ENCODE measurements at regions of chr3 and their contacts with region 1.

Region 1: GRCh38 chr3:30475038-30475808 is 131.2 kb upstream of the TGFBR2 start:
- DNase-seq: peak; percentile 64
- H3K4me3 Mint-ChIP-seq: peak overlapping the region; percentile 2
- H3K27ac Mint-ChIP-seq: peak overlapping the region; percentile 14
- H3K4me1 Mint-ChIP-seq: peaks cover 52% of the 10 kb centered on the region
- H3K27me3 Mint-ChIP-seq: no peaks in the 10 kb centered on the region

Region 2: DNA sequence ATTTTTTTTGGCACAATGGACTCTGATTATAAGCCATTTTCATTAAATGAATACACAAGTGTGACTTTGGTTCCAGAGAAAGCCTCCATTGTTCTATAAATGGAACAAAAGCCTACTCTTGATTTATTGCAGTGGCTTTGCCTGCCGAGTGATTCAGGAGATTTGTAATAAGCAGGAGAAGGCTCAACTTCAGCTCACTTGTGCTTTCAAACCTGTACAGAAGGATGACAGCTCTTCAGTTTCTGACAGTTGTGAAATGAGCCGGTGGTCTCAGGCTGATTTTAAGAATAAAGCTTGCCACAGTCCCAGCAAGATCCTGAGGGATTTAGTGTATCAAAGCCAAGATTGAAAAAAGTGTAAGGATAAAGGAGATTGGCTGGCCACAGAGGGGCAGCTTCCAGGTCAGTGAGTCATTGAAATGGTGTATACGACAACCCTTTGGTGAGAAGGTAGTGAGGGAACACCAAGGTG is 307.6 kb before region 1 on chr3:
- CTCF ChIA-PET with region 1: no interaction called
- intact Hi-C with region 1: no loop called
- DNase-seq: no peak
- H3K4me3 Mint-ChIP-seq: no peak overlapping the region
- H3K27ac Mint-ChIP-seq: no peak overlapping the region
- H3K4me1 Mint-ChIP-seq: no peaks in the 10 kb centered on the region
- H3K27me3 Mint-ChIP-seq: no peaks in the 10 kb centered on the region

Region 3: GRCh38 chr3:30353711-30354467 is 121.3 kb before region 1 on chr3:
- CTCF ChIA-PET with region 1: no interaction called
- intact Hi-C with region 1: loop called (anchors 2 kb)
- DNase-seq: peak; percentile 74
- H3K4me3 Mint-ChIP-seq: no peak overlapping the region
- H3K27ac Mint-ChIP-seq: peak overlapping the region; percentile 59
- H3K4me1 Mint-ChIP-seq: peaks cover 72% of the 10 kb centered on the region
- H3K27me3 Mint-ChIP-seq: no peaks in the 10 kb centered on the region

Region 4: GRCh38 chr3:30401971-30402370 is 73.3 kb before region 1 on chr3:
- CTCF ChIA-PET with region 1: no interaction called
- intact Hi-C with region 1: loop called (anchors 5 kb)
- DNase-seq: peak; percentile 12
- H3K4me3 Mint-ChIP-seq: no peak overlapping the region
- H3K27ac Mint-ChIP-seq: no peak overlapping the region
- H3K4me1 Mint-ChIP-seq: peaks cover 16% of the 10 kb centered on the region
- H3K27me3 Mint-ChIP-seq: no peaks in the 10 kb centered on the region

Region 5: GRCh38 chr3:30486368-30486767 is 11.1 kb after region 1 on chr3:
- CTCF ChIA-PET with region 1: no interaction called
- intact Hi-C with region 1: no loop called
- DNase-seq: no peak
- H3K4me3 Mint-ChIP-seq: no peak overlapping the region
- H3K27ac Mint-ChIP-seq: no peak overlapping the region
- H3K4me1 Mint-ChIP-seq: no peaks in the 10 kb centered on the region
- H3K27me3 Mint-ChIP-seq: no peaks in the 10 kb centered on the region

Region 6: GRCh38 chr3:30502742-30503073 is 27.5 kb after region 1 on chr3:
- CTCF ChIA-PET with region 1: interaction called, 3 read pairs
- intact Hi-C with region 1: loop called (anchors 1 kb)
- DNase-seq: no peak
- H3K4me3 Mint-ChIP-seq: no peak overlapping the region
- H3K27ac Mint-ChIP-seq: peak overlapping the region; percentile 43
- H3K4me1 Mint-ChIP-seq: peaks cover 30% of the 10 kb centered on the region
- H3K27me3 Mint-ChIP-seq: no peaks in the 10 kb centered on the region

Region 7: DNA sequence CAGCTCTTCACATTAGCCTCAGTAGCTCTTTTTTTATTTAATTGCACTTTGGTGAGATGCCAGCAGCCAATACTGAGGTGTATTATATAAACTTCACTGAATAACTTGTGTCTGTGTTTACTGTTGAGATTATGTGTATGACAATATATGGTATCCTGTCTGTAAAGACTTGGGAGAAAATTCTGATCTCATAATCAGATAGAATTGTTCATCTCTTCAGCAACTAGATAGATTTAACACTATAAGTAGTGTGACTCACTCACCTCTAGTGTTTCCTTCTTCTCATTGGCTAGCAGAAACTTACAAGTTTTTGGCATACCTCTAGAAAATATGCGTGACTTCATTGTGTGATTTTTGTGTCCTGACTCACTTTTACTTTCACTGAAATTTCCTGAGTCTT is 63.6 kb after region 1 on chr3:
- CTCF ChIA-PET with region 1: no interaction called
- intact Hi-C with region 1: loop called (anchors 2 kb)
- DNase-seq: no peak
- H3K4me3 Mint-ChIP-seq: no peak overlapping the region
- H3K27ac Mint-ChIP-seq: no peak overlapping the region
- H3K4me1 Mint-ChIP-seq: peaks cover 19% of the 10 kb centered on the region
- H3K27me3 Mint-ChIP-seq: no peaks in the 10 kb centered on the region

Region 8: DNA sequence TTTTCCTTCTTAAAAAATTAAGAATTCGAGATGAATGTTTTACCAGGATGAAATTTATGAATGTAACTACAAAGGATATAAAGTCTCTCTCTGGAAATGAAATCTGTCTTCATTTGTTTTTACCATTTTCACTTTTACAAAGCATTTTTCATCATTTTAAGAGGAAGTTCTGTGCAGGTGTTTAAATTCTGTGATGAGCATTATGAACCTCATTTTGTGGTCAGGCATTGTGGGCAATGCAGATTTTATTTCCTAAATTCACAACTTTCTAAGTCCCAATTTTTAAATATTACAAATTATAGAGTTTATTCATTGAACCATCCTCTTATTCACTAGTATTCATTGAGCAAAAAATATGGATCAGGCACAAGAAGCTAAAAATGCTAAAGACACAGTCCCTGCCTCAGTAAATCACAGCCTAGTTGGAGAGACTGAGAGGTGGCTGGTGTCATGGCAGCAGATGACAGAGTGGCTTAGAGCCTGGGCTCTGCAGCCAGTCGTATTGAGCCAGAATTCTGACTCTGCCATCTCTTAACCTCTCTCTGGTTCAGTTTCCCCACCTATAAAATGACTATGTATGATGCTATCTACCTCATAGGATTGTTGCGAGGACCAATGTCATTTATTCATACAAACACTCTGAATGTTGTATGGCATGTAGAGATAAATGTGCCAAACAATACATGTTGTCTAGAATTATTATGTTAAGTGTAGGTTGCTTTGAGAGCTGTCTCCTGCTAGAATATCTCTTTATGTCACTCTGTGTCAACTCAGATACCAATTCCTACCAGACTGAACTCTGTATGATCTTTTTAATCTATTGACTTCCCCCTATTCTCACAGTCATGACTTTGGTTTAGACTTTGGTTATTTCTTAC is 123.7 kb after region 1 on chr3:
- CTCF ChIA-PET with region 1: no interaction called
- intact Hi-C with region 1: loop called (anchors 1 kb)
- DNase-seq: peak; percentile 48
- H3K4me3 Mint-ChIP-seq: no peak overlapping the region
- H3K27ac Mint-ChIP-seq: peak overlapping the region; percentile 50
- H3K4me1 Mint-ChIP-seq: peaks cover 52% of the 10 kb centered on the region
- H3K27me3 Mint-ChIP-seq: no peaks in the 10 kb centered on the region

Region 9: DNA sequence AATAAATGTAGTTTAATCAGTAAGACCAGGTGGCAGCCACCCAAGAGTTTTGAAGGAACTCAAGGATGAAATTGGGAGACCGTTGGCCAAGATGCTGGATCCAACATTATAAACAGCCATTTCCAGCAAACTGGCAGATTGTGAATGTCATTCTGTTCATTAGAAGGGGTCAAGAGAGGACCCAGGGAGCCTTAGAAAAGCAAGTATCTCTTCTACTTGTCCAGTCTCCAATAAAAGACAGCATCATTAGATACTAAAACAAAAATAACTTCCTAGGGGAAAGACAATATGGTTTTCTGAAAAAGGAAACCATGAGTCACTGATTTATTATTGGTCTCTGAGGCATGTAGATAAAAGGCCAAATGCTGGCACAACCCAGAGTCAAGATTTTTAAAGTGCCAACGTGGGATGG is 351.3 kb after region 1 on chr3:
- CTCF ChIA-PET with region 1: no interaction called
- intact Hi-C with region 1: no loop called
- DNase-seq: no peak
- H3K4me3 Mint-ChIP-seq: no peak overlapping the region
- H3K27ac Mint-ChIP-seq: no peak overlapping the region
- H3K4me1 Mint-ChIP-seq: no peaks in the 10 kb centered on the region
- H3K27me3 Mint-ChIP-seq: peaks cover 4% of the 10 kb centered on the region

Measured in activated naive CD4-positive, alpha-beta T cell treated with anti-CD3 and anti-CD28 coated beads for 36 hours (primary cell).